ENCODE measurements at regions of chr19 and their contacts with region 1.

Region 1: DNA sequence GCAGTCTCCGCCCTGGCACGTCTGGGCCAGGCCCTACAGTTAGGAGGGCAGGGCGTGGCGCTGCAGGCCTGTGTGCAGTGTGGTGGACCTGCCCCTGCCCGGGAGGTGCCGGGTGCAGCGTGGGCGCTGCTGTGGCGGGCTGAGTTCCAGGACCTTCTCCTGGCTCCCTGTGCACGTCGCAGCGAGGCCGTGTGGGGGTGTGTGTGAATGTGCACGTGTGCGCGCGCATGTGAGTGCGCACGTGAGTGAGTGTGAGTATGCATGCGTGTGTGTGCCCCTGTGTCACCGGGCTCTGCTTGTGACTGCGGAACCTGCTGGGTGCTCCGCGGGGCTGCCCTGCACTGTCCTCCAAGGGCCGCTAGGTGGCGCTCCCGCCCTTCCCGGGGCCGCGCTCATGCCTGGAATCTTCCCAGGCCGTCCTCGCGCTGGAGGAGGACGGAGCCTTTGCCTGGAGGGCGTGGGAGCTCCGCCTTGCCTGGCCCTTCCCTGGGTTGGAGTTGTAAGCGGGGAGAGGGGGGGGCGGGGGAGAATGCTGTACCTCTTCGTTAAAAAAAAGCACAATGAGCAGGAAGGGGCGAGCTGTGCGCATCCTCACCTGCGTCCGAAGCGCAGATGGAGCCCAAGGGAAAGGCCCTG is 79.3 kb downstream of the KDM4B start:
- DNase-seq: peak; percentile 39
- H3K4me3 Mint-ChIP-seq: no peak overlapping the region
- H3K27ac Mint-ChIP-seq: no peak overlapping the region
- H3K4me1 Mint-ChIP-seq: no peaks in the 10 kb centered on the region
- H3K27me3 Mint-ChIP-seq: no peaks in the 10 kb centered on the region

Region 2: GRCh38 chr19:4744451-4745174 is 303.6 kb before region 1 on chr19:
- intact Hi-C with region 1: no loop called
- DNase-seq: no peak
- H3K4me3 Mint-ChIP-seq: no peak overlapping the region
- H3K27ac Mint-ChIP-seq: no peak overlapping the region
- H3K4me1 Mint-ChIP-seq: no peaks in the 10 kb centered on the region
- H3K27me3 Mint-ChIP-seq: peaks cover 20% of the 10 kb centered on the region

Region 3: GRCh38 chr19:5154129-5154798 is 106.1 kb after region 1 on chr19:
- intact Hi-C with region 1: loop called (anchors 5 kb)
- DNase-seq: no peak
- H3K4me3 Mint-ChIP-seq: no peak overlapping the region
- H3K27ac Mint-ChIP-seq: no peak overlapping the region
- H3K4me1 Mint-ChIP-seq: no peaks in the 10 kb centered on the region
- H3K27me3 Mint-ChIP-seq: no peaks in the 10 kb centered on the region

Region 4: GRCh38 chr19:5170329-5170745 is 122.1 kb after region 1 on chr19:
- intact Hi-C with region 1: loop called (anchors 1 kb)
- DNase-seq: peak; percentile 31
- H3K4me3 Mint-ChIP-seq: no peak overlapping the region
- H3K27ac Mint-ChIP-seq: peak overlapping the region; percentile 24
- H3K4me1 Mint-ChIP-seq: no peaks in the 10 kb centered on the region
- H3K27me3 Mint-ChIP-seq: peaks cover 4% of the 10 kb centered on the region

Region 5: DNA sequence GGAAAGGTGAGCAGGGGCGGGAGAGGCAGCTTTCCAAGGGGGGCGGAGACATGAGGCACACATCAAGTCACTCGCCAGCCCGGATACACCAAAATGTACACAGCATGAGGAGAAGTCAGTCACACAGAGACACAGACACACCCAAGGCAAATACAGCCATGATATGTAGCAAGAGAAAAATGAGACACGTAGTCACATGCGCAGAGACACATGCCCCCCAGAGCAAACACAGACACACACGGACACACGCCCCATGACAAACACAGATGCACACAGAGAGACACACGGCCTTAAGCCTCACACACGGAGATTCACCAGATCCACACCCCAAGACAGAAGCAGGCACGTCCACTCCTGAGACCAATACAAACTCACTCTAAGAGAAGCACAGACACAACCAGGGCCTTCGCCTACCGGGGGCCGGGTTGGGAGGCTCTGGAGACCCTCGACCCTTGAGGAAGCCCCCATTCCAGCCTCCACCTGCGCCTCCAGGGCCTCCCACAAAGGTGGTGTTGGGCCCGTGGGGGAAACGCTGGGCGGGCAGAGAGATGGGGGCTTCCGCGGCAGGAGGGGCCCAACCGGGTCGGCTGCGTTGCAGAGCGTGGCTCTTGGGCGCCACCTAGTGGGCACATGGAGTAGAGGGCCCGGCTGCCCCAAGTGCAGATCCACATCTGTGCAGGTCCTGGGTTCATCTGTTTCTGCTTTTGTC is 529.7 kb after region 1 on chr19:
- intact Hi-C with region 1: loop called (anchors 2 kb)
- DNase-seq: peak; percentile 51
- H3K4me3 Mint-ChIP-seq: no peak overlapping the region
- H3K27ac Mint-ChIP-seq: no peak overlapping the region
- H3K4me1 Mint-ChIP-seq: peaks cover 10% of the 10 kb centered on the region
- H3K27me3 Mint-ChIP-seq: no peaks in the 10 kb centered on the region

Measured in activated T-helper 1 cell treated with anti-CD3 and anti-CD28 coated beads, Interleukin-12 subunit alpha, Interleukin-12 subunit beta, Interleukin-2, Interleukin-4 antibody, amounts not matched to agents 30 ng/mL and 10 ng/mL and 1 ng/mL, durations not matched to agents 14 hours and 24 hours and 36 hours (primary cell).